ENCODE measurements at regions of chr3 and their contacts with region 1.

Region 1: GRCh38 chr3:136135039-136135802 is 60.9 kb downstream of the MSL2 start:
- DNase-seq: no peak
- ATAC-seq: no peak
- H3K4me3 ChIP-seq: no peak overlapping the region
- H3K27ac ChIP-seq: no peak overlapping the region
- H3K4me1 ChIP-seq: peaks cover 0 to 4% (median 0%) of the 10 kb centered on the region in 3 donors
- H3K27me3 ChIP-seq: no peaks in the 10 kb centered on the region
- CTCF ChIP-seq: no peak

Region 2: GRCh38 chr3:135834465-135834864 is 300.8 kb before region 1 on chr3:
- intact Hi-C with region 1: no loop called
- DNase-seq: no peak
- ATAC-seq: no peak
- H3K4me3 ChIP-seq: no peak overlapping the region
- H3K27ac ChIP-seq: no peak overlapping the region
- H3K4me1 ChIP-seq: no peaks in the 10 kb centered on the region
- H3K27me3 ChIP-seq: no peaks in the 10 kb centered on the region
- CTCF ChIP-seq: no peak

Region 3: DNA sequence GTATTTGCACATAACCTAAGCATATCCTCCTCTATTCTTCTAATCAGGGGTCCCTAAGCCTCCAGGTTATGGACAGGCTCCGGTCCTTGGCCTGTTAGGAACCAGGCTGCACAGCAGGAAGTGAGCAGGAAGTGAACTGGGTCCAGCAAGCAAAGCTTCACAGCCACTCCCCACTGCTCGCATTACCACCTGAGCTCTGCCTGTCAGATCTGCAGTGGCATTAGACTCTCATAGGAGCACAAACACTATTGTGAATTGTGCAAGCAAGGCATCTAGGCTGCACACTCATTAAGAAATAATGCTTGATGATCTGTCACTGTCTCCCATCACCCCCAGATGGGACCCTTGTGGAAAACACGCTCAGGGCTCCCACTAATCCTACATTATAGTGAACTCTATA is 51.1 kb after region 1 on chr3:
- intact Hi-C with region 1: loop called in 1 of 3 experiments (anchors 10 kb)
- DNase-seq: no peak
- ATAC-seq: peak in 3 of 4 donors; percentile 56 to 67 (median 64)
- H3K4me3 ChIP-seq: no peak overlapping the region
- H3K27ac ChIP-seq: no peak overlapping the region
- H3K4me1 ChIP-seq: peaks cover 13 to 34% (median 21%) of the 10 kb centered on the region in 3 donors
- H3K27me3 ChIP-seq: no peaks in the 10 kb centered on the region
- CTCF ChIP-seq: no peak

Measured in pancreas (tissue), 10 donors.